ENCODE measurements at regions of chr3 and their contacts with region 1.

Region 1: GRCh38 chr3:64685800-64686445 is 1.9 kb downstream of the ADAMTS9 start:
- DNase-seq: peak; percentile 96
- H3K4me3 ChIP-seq: peak overlapping the region; percentile 61 to 89 (median 88)
- H3K27ac ChIP-seq: peak overlapping the region; percentile 84
- H3K4me1 ChIP-seq: peaks cover 17% of the 10 kb centered on the region
- H3K27me3 ChIP-seq: no peaks in the 10 kb centered on the region
- CTCF ChIP-seq: peak; percentile 10 to 51
- POLR2A ChIP-seq: peak; percentile 70

Region 2: GRCh38 chr3:64612082-64612860 is 73.7 kb before region 1 on chr3:
- CTCF ChIA-PET with region 1: interaction called, 4 read pairs
- POLR2A ChIA-PET with region 1: no interaction called
- dilution Hi-C with region 1: no loop called
- intact Hi-C with region 1: loop called (anchors 1 kb)
- DNase-seq: no peak
- H3K4me3 ChIP-seq: no peak overlapping the region
- H3K27ac ChIP-seq: no peak overlapping the region
- H3K4me1 ChIP-seq: peaks cover 16% of the 10 kb centered on the region
- H3K27me3 ChIP-seq: no peaks in the 10 kb centered on the region
- CTCF ChIP-seq: no peak
- POLR2A ChIP-seq: no peak

Region 3: GRCh38 chr3:64796607-64797399 is 110.9 kb after region 1 on chr3:
- CTCF ChIA-PET with region 1: no interaction called
- POLR2A ChIA-PET with region 1: no interaction called
- dilution Hi-C with region 1: no loop called
- intact Hi-C with region 1: loop called (anchors 1 kb)
- DNase-seq: peak; percentile 88
- H3K4me3 ChIP-seq: no peak overlapping the region
- H3K27ac ChIP-seq: peak overlapping the region; percentile 87
- H3K4me1 ChIP-seq: peaks cover 26% of the 10 kb centered on the region
- H3K27me3 ChIP-seq: no peaks in the 10 kb centered on the region
- CTCF ChIP-seq: no peak
- POLR2A ChIP-seq: peak; percentile 71

Region 4: GRCh38 chr3:64928697-64929096 is 242.8 kb after region 1 on chr3:
- CTCF ChIA-PET with region 1: no interaction called
- POLR2A ChIA-PET with region 1: no interaction called
- dilution Hi-C with region 1: no loop called
- intact Hi-C with region 1: loop called (anchors 1 kb)
- DNase-seq: peak; percentile 93
- H3K4me3 ChIP-seq: no peak overlapping the region
- H3K27ac ChIP-seq: peak overlapping the region; percentile 54
- H3K4me1 ChIP-seq: peaks cover 16% of the 10 kb centered on the region
- H3K27me3 ChIP-seq: no peaks in the 10 kb centered on the region
- CTCF ChIP-seq: peak; percentile 8 to 27
- POLR2A ChIP-seq: no peak

Region 5: GRCh38 chr3:64995857-64996551 is 310.1 kb after region 1 on chr3:
- CTCF ChIA-PET with region 1: interaction called, 4 read pairs
- POLR2A ChIA-PET with region 1: no interaction called
- dilution Hi-C with region 1: no loop called
- intact Hi-C with region 1: loop called (anchors 5 kb)
- DNase-seq: peak; percentile 91
- H3K4me3 ChIP-seq: no peak overlapping the region
- H3K27ac ChIP-seq: peak overlapping the region; percentile 60
- H3K4me1 ChIP-seq: peaks cover 33% of the 10 kb centered on the region
- H3K27me3 ChIP-seq: no peaks in the 10 kb centered on the region
- CTCF ChIP-seq: no peak
- POLR2A ChIP-seq: no peak

Region 6: GRCh38 chr3:65439641-65440284 is 753.8 kb after region 1 on chr3:
- CTCF ChIA-PET with region 1: no interaction called
- POLR2A ChIA-PET with region 1: no interaction called
- dilution Hi-C with region 1: no loop called
- intact Hi-C with region 1: loop called (anchors 5 kb)
- DNase-seq: peak; percentile 59
- H3K4me3 ChIP-seq: no peak overlapping the region
- H3K27ac ChIP-seq: no peak overlapping the region
- H3K4me1 ChIP-seq: no peaks in the 10 kb centered on the region
- H3K27me3 ChIP-seq: no peaks in the 10 kb centered on the region
- CTCF ChIP-seq: peak; percentile 35 to 66
- POLR2A ChIP-seq: no peak

Measured in endothelial cell of umbilical vein (primary cell).